ENCODE measurements at regions of chr7 and their contacts with region 1.

Region 1: GRCh38 chr7:142603870-142604448 is 145.3 kb upstream of the PRSS1 start:
- DNase-seq: peak; percentile 70

Region 2: GRCh38 chr7:142587578-142588191 is 16.3 kb before region 1 on chr7:
- CTCF ChIA-PET with region 1: interaction called, 13 read pairs
- POLR2A ChIA-PET with region 1: no interaction called
- DNase-seq: peak; percentile 74

Region 3: GRCh38 chr7:142646386-142647140 is 42.6 kb after region 1 on chr7:
- CTCF ChIA-PET with region 1: no interaction called
- POLR2A ChIA-PET with region 1: no interaction called
- DNase-seq: no peak

Region 4: GRCh38 chr7:142782922-142783900 is 179.3 kb after region 1 on chr7:
- CTCF ChIA-PET with region 1: interaction called, 16 read pairs
- POLR2A ChIA-PET with region 1: no interaction called
- DNase-seq: peak; percentile 89

Region 5: DNA sequence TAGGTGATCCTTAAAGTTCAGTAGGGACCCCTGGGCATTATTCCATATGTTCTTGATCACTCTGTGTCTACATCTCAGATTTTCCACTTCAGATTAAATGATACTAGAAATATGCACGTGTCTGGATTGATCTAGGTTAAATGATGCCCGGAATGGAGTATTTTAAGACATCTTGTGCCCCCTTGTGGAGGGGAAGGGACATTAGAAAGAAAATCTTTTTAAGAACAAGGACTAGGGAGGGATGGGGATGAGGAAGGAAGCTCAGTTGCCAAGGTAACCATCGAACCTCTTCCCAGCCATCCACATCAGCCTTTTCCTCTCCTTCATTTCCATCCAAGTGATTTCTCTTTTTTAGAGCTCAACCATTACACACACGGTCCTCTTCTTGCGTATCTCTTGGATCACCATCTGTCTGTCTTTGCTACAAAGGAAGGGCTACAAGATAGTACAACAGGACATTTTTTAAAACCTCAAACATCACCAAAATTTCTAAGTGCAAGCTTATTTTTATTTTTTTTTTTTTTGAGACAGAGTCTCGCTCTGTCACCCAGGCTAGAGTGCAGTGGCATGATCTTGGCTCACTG is 207.3 kb after region 1 on chr7:
- CTCF ChIA-PET with region 1: interaction called, 11 read pairs
- POLR2A ChIA-PET with region 1: no interaction called
- DNase-seq: peak; percentile 55

Region 6: DNA sequence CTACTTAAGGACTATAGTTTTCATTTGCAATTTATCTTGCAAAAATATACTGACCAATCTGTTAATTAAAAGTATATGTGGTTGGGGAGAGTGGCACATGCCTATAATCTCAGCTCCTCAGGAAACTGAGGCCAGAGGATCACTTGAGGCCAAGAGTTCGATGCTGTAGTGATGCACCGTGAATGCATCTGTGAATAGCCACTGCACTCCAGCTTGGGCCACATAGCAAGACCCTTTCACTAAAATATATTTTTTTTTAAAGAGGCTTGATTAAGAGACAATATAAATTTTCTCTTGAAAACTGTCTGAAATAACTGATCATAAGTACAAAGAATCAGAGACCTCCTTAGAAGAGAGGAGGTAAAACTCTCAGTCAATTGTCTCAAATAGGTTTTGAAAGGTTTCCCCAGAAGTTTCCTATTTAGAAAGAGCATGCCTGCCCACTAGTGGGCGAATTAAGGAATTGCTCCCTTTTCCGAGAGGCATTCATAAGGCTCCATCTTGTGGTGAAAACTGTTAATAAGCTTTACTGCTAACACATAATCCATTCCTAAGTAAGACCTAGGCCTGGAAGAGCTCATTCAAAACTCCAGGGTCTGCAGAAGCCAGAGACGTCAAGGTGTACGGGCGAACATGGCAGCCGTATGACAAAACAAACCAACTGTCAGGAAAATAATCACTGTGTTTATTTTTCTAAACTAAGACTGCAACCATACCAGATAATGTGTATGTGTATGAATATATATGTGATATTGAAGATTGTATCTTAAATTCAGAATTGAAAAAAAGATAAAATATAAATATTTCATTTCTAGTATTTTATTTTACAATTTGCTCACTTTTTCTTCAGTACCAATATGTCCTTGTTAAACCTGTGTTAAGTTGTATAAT is 611.1 kb after region 1 on chr7:
- CTCF ChIA-PET with region 1: interaction called, 12 read pairs
- POLR2A ChIA-PET with region 1: no interaction called
- DNase-seq: peak; percentile 84

Measured in HEK293T (cell line).